PC-3 (cell line): ENCODE measurements at regions of chr11 and their contacts with region 1.

Region 1: DNA sequence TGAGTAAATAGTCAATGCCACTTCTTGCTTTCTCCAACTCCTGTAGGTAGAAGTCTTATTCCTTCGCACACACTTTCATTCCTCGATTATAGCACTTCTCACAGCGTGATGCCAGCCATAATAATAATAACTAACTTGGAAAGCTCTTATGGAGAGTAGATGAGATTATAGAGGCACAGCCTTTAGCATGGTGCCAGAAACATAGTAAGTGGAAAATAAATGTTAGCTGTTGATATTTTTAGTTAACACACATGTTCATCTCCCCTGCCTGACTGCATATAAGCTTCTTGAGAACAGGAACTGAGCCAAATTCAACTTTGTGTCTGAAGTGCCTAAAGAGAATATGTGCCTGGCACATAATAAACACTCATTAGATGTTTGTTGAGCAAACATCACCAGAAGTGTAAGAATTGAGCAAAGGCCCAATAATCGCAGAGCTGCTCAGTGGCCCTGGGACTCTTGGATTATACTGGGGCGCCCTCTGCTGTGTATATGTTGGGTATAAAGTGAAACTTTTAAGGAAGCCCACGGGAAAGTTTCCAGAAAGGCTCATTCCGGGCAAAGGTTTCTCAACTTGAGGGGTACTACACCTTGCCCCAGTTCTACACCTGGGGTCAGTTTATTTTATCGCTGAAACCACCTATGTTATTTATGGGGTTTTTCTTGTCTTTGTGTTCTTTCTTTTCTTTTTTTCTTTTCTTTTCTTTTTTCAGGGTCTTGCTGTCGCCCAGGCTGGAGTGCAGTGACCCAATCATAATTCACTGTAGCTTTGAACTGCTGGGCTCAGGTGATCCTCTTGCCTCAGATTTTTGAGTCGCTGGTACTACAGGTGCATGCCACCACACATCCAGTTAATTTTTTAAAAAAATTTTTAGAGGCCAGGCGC is 22.3 kb downstream of the SLN start:
- DNase-seq: peak; percentile 94
- ATAC-seq: peak; percentile 86
- H3K4me3 ChIP-seq: peak overlapping the region; percentile 45; the same call in 1 of the 2 replicates
- H3K27ac ChIP-seq: no peak overlapping the region
- H3K4me1 ChIP-seq: peaks cover 19% of the 10 kb centered on the region
- H3K27me3 ChIP-seq: 0 out of 2 replicates have a peak, but pooled peaks cover 6% of the 10 kb centered on the region
- CTCF ChIP-seq: peak; percentile 98

Region 2: GRCh38 chr11:107573438-107573837 is 116.1 kb before region 1 on chr11:
- CTCF ChIA-PET with region 1: interaction called, 10 read pairs
- POLR2A ChIA-PET with region 1: no interaction called
- intact Hi-C with region 1: loop called (anchors 1 kb)
- DNase-seq: no peak
- ATAC-seq: no peak
- H3K4me3 ChIP-seq: no peak overlapping the region
- H3K27ac ChIP-seq: no peak overlapping the region
- H3K4me1 ChIP-seq: no peaks in the 10 kb centered on the region
- H3K27me3 ChIP-seq: peaks cover 5% of the 10 kb centered on the region; the same call in 1 of the 2 replicates
- CTCF ChIP-seq: no peak

Region 3: DNA sequence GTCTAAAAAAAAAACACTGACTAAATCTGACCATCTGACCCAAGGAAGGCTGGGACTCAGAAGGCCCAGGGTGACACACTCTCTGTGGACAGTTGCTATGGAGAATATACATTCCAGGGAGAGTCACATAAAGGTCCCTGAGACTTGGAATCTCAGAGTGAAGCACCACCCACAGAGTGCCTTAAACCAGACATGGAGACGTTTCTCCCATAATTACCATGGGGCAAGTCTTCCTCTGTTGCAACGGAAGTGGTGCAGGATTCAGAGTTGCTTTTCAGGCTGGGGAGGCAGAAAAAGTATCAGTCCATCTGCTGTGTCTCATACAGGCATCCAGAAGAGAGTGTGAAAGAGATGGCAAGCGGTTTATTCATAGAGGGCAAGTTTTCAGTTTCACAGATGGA is 81.0 kb after region 1 on chr11:
- CTCF ChIA-PET with region 1: interaction called, 6 read pairs
- POLR2A ChIA-PET with region 1: interaction called, 5 read pairs
- intact Hi-C with region 1: loop called (anchors 1 kb)
- DNase-seq: peak; percentile 51
- ATAC-seq: peak; percentile 9; the same call in 1 of the 2 replicates
- H3K4me3 ChIP-seq: no peak overlapping the region
- H3K27ac ChIP-seq: no peak overlapping the region
- H3K4me1 ChIP-seq: peaks cover 15% of the 10 kb centered on the region
- H3K27me3 ChIP-seq: peaks cover 6% of the 10 kb centered on the region
- CTCF ChIP-seq: no peak

Region 4: DNA sequence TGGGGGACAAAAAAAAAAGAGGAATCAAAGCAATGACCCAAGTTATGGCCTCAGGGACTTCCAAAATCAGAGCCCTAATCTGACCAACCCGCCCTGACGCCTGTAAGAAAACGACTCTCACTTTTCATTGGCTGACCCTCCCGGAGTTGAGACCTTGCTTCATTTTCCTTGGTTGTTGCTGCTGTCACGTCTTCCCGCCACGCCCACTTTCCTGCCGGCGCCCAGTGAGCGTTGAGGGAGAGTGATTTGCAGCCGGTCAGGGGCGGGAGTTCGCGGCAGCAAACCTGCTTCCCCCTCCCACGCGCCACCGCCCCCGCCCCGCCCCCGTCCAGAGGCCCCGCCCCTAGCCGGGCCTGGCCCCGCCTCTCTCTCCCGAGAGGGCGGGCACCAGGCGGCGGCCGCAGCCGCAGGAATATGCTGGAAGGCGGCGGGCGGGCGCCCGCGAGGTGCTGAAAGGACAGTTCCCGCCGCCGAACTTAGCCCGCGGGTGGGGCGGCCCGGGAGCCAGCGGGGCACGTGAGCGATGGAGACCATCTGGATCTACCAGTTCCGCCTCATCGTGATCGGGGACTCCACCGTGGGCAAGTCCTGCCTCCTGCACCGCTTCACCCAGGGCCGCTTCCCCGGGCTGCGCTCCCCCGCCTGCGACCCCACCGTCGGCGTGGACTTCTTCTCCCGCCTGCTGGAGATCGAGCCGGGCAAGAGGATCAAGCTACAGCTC is 238.6 kb after region 1 on chr11 and contains the start of gene RAB39A:
- CTCF ChIA-PET with region 1: interaction called, 11 read pairs
- POLR2A ChIA-PET with region 1: no interaction called
- intact Hi-C with region 1: no loop called
- DNase-seq: peak; percentile 92
- ATAC-seq: peak; percentile 81
- H3K4me3 ChIP-seq: peak within 1 kb of the TSS; percentile 1; the same call in 1 of the 2 replicates
- H3K27ac ChIP-seq: no peak within 1 kb of the TSS
- H3K4me1 ChIP-seq: peaks cover 17% of the 10 kb centered on the region
- H3K27me3 ChIP-seq: peaks cover 29% of the 10 kb centered on the region
- CTCF ChIP-seq: no peak
- total RNA-seq, gene RAB39A: not detected in 2 replicates